Activated naive CD4-positive, alpha-beta T cell treated with anti-CD3 and anti-CD28 coated beads for 36 hours (primary cell): ENCODE measurements at regions of chr20 and their contacts with region 1.

Region 1: DNA sequence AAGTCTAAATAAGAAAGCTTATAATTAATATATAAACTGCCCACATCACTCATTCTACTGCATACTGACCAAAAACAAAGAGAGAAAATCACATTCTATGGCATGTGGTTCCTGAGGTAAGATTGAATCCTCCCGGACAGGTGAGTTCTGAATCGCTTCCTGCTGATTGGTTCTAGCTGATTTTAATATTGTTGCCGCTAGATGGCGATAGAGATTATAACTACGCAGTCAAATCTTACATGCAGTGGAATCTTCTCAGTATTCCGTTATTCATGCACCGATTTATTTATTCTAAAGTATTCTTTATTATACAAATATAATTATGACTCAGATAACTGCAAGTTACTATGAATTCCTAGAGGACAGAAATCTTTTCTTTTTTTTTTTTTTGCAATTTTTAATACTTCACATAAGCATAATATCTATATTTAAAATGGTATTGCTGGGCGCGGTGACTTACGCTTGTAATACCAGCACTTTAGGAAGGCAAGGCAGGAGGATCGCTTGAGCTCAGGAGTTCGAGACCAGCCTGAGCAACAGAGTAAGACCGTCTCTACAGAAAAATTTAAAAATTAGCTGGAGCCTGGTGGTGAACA is 24.2 kb upstream of the TMX4 start:
- DNase-seq: peak; percentile 17
- H3K4me3 Mint-ChIP-seq: no peak overlapping the region
- H3K27ac Mint-ChIP-seq: no peak overlapping the region
- H3K4me1 Mint-ChIP-seq: peaks cover 2% of the 10 kb centered on the region
- H3K27me3 Mint-ChIP-seq: peaks cover 8% of the 10 kb centered on the region

Region 2: DNA sequence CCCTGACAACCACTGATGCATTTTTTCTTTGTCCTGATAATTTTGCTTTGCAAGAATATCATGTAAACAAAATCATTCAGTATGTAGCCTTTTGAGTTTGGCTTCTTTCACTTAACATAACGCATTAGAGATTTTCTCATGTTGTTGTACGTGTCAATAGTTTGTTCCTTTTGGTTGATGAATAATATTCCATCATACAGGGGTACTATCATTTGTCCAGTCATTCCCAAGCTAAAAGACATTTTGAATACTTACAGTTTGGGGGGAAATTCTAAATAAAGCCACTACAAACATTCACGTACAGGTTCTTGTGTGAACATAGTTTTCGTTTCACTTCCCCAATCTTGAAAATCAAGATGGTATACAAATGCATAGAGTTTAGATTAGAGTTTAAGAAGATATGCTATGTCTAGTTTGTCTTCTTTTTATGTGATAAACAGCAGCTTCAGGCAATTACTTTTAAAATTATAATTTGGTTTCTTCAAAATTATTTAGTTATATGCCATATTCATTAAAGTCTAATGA is 108.7 kb before region 1 on chr20:
- CTCF ChIA-PET with region 1: no interaction called
- intact Hi-C with region 1: loop called (anchors 2 kb)
- DNase-seq: no peak
- H3K4me3 Mint-ChIP-seq: no peak overlapping the region
- H3K27ac Mint-ChIP-seq: no peak overlapping the region
- H3K4me1 Mint-ChIP-seq: no peaks in the 10 kb centered on the region
- H3K27me3 Mint-ChIP-seq: peaks cover 13% of the 10 kb centered on the region

Region 3: DNA sequence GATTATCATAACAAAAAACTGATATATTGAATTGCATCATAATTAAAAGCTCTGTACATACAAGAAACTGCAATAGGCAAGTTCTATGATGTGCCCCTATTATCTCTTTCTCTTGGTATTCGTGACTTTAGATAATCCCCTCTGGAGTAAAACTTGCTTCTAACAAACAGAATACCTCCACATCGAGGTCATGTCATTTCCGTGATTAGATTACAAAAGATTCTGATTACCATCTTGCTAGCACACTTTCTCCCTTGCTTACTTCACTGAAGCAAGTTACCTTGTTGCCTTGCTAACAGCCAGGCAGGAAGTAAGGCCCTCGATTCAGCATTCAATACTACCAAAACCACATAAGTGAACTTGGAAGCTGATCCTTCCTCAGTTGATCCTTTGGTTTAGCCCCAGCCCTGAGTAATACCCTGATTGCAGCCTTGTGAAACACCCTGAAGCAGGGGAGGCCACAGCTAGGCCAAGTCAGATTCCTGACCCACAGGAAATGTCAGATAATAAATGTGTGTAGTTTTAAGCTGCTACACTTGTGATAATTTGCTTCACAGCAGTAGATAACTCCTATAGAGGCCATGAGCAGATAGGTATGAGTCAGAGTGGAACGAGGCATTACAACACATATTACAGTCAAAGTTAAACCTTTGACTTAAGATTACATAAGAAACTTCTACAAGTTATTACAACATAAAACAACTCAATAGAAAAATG is 29.5 kb after region 1 on chr20:
- CTCF ChIA-PET with region 1: interaction called, 4 read pairs
- intact Hi-C with region 1: loop called (anchors 1 kb)
- DNase-seq: peak; percentile 18
- H3K4me3 Mint-ChIP-seq: no peak overlapping the region
- H3K27ac Mint-ChIP-seq: peak overlapping the region; percentile 78
- H3K4me1 Mint-ChIP-seq: peaks cover 8% of the 10 kb centered on the region
- H3K27me3 Mint-ChIP-seq: no peaks in the 10 kb centered on the region

Region 4: GRCh38 chr20:8131598-8132483 is 88.1 kb after region 1 on chr20 and contains the start of gene PLCB1:
- CTCF ChIA-PET with region 1: interaction called, 5 read pairs
- intact Hi-C with region 1: loop called (anchors 1 kb)
- DNase-seq: peak; percentile 78
- H3K4me3 Mint-ChIP-seq: peak within 1 kb of the TSS; percentile 67
- H3K27ac Mint-ChIP-seq: no peak within 1 kb of the TSS
- H3K4me1 Mint-ChIP-seq: peaks cover 12% of the 10 kb centered on the region
- H3K27me3 Mint-ChIP-seq: peaks cover 32% of the 10 kb centered on the region
- total RNA-seq, gene PLCB1: 1.2 TPM

Region 5: DNA sequence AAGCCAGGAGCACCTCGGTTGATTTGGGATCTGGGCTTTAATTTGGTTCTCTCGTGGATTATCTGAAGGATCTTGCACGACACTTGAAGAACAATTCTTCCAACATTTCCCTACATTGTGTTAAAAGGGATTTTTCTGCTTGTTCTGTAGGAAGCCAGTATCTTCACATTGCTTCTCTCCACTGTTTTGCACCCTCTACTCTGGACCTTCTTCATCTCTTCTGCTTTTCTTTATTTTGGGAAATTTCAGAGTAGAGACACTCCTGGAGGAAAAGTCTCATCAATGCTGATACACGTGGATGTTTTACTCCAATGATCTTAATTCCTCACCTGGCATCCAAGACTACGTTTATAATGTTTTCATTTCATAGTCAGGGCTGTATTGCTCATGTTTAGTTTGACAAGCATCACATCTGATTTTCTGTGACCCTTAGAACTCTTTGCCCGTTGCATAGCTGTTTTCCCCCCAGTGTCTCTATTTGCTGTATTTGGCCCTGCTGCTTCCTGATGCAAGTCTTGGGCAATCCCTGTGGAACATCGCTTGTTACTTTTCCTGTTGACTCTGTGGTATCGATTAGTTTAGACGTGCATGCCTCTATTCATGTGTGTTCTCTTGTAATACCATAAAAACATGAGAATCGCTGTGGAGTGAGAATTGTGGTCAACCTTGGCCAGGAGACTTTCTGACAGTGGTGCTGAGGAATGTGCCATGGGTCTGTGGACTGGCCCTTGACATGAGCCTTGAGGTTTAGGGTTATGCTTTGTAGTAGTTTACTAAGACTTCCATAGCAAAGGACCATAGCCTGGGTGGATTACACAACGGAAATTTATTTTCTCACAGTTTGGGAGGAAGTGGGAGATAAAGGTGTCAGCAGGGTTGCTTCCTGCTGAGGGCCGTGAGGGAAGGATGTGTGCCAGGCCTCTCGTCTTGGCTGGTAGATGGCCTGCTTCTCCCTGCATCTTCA is 100.8 kb after region 1 on chr20:
- CTCF ChIA-PET with region 1: no interaction called
- intact Hi-C with region 1: no loop called
- DNase-seq: no peak
- H3K4me3 Mint-ChIP-seq: no peak overlapping the region
- H3K27ac Mint-ChIP-seq: no peak overlapping the region
- H3K4me1 Mint-ChIP-seq: peaks cover 7% of the 10 kb centered on the region
- H3K27me3 Mint-ChIP-seq: no peaks in the 10 kb centered on the region

Region 6: DNA sequence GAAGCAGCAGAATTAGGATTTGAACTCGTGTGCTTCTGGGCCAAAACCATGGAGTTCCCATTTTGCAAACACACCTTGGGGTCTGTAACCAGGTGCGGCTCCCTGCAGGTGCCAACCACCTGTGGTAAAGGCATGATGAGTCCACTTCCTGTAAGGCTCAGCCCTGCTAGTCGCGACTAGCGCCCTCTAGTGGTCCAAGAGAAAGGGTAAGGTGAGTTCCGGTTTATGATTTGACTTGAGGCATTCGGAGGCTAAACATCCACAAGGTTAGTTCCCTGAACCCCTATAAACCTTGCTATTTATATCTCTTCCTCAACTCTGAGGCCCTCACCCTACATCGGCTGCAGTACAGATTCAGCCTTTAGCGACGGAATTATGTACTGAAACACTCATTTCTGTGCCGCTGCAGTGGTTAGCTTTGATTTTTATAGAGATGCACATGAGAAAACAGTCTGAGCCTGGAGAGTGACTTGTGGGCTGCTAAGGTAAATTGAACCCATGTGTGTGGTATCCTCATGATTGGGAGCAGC is 261.7 kb after region 1 on chr20:
- CTCF ChIA-PET with region 1: interaction called, 13 read pairs
- intact Hi-C with region 1: loop called (anchors 1 kb)
- DNase-seq: peak; percentile 83
- H3K4me3 Mint-ChIP-seq: no peak overlapping the region
- H3K27ac Mint-ChIP-seq: no peak overlapping the region
- H3K4me1 Mint-ChIP-seq: no peaks in the 10 kb centered on the region
- H3K27me3 Mint-ChIP-seq: peaks cover 2% of the 10 kb centered on the region

Region 7: GRCh38 chr20:8389381-8390036 is 345.7 kb after region 1 on chr20:
- CTCF ChIA-PET with region 1: interaction called, 12 read pairs
- intact Hi-C with region 1: loop called (anchors 1 kb)
- DNase-seq: no peak
- H3K4me3 Mint-ChIP-seq: no peak overlapping the region
- H3K27ac Mint-ChIP-seq: no peak overlapping the region
- H3K4me1 Mint-ChIP-seq: no peaks in the 10 kb centered on the region
- H3K27me3 Mint-ChIP-seq: peaks cover 2% of the 10 kb centered on the region

Region 8: GRCh38 chr20:8535403-8536261 is 491.8 kb after region 1 on chr20:
- CTCF ChIA-PET with region 1: interaction called, 6 read pairs
- intact Hi-C with region 1: loop called (anchors 5 kb)
- DNase-seq: peak; percentile 7
- H3K4me3 Mint-ChIP-seq: no peak overlapping the region
- H3K27ac Mint-ChIP-seq: no peak overlapping the region
- H3K4me1 Mint-ChIP-seq: no peaks in the 10 kb centered on the region
- H3K27me3 Mint-ChIP-seq: no peaks in the 10 kb centered on the region